ENCODE measurements at regions of chr2 and their contacts with region 1.

Region 1: GRCh38 chr2:139271149-139271548 is 491.0 kb upstream of the NXPH2 start:
- DNase-seq: no peak
- ATAC-seq: no peak
- H3K4me3 ChIP-seq: no peak overlapping the region
- H3K27ac ChIP-seq: no peak overlapping the region
- H3K4me1 ChIP-seq: no peaks in the 10 kb centered on the region
- H3K27me3 ChIP-seq: no peaks in the 10 kb centered on the region; a peak in 1 of 4 replicates
- CTCF ChIP-seq: no peak
- EP300 ChIP-seq: no peak
- POLR2A ChIP-seq: no peak
- RAD21 ChIP-seq: no peak

Region 2: DNA sequence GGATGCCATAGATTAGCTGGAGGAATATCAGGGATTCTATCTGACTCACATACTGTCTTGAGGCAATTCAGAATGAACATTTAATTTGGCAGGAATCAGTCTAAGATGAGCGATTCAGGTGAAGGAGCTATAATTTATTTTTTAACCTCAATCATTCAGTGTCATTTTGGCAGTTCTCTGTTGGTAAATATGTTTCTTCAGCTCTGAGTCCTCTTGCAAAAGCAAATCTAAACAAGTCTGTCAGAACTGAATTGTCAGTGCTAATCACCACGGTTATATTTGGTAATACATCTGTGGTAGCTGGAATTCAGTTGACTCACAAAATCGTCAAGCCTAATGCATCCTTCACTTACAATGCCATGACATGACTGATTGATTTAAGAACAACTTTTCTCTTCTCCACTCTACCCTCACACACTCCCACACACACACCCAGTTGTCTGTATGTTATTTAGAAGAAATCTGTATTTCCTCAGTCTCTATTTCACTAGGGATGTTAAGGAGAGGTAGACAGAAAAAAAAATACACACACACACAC is 25.6 kb after region 1 on chr2:
- CTCF ChIA-PET with region 1: no interaction called
- POLR2A ChIA-PET with region 1: no interaction called
- RAD21 ChIA-PET with region 1: no interaction called
- SMC1A ChIA-PET with region 1: no interaction called
- in situ Hi-C with region 1: no loop called
- intact Hi-C with region 1: loop called (anchors 2 kb)
- DNase-seq: no peak
- ATAC-seq: no peak
- H3K4me3 ChIP-seq: no peak overlapping the region
- H3K27ac ChIP-seq: no peak overlapping the region
- H3K4me1 ChIP-seq: no peaks in the 10 kb centered on the region
- H3K27me3 ChIP-seq: no peaks in the 10 kb centered on the region
- CTCF ChIP-seq: no peak
- EP300 ChIP-seq: no peak
- POLR2A ChIP-seq: no peak
- RAD21 ChIP-seq: no peak